PC-3 (cell line): ENCODE measurements at regions of chr1 and their contacts with region 1.

Region 1: GRCh38 chr1:2044510-2045319 is 5.5 kb upstream of the PRKCZ start:
- DNase-seq: peak; percentile 85
- ATAC-seq: peak; percentile 54
- H3K4me3 ChIP-seq: peak overlapping the region; percentile 53
- H3K27ac ChIP-seq: no peak overlapping the region
- H3K4me1 ChIP-seq: peaks cover 18% of the 10 kb centered on the region
- H3K27me3 ChIP-seq: no peaks in the 10 kb centered on the region
- CTCF ChIP-seq: peak; percentile 80

Region 2: DNA sequence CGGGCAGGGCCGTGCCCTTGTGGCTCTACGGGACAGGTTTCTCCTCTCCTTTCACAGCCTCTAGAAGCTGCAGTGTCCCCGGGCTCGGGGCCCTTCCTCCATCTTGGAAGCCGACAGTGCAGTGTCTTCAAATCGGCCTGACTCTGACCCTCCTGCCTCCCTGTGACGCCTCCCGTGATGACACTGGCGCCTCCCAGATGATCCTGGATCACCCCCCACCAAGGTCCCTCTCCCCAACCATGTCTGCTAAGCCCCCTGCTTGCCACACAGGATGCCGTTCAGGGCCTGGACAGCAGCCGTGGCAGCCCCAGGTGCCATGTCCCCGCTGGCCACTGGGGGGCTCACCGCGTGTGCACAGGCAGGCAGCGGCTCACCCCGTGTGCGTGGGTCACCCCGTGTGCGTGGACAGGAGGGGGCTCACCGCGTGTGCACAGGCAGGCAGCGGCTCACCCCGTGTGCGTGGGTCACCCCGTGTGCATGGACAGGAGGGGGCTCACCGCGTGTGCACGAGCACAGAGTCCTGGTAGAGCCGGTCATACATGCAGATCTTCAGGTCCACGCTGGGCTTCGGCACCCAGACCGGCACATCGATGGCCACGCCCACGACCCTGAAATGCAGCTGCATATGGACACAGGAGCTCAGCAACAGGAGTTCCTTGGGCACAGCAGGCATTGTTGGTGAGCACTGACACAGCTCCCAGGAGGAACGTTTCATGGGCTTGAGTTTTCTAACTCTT is 100.7 kb before region 1 on chr1:
- CTCF ChIA-PET with region 1: interaction called, 15 read pairs
- POLR2A ChIA-PET with region 1: no interaction called
- intact Hi-C with region 1: loop called (anchors 2 kb)
- DNase-seq: peak; percentile 74
- ATAC-seq: peak; percentile 98
- H3K4me3 ChIP-seq: peak overlapping the region; percentile 70
- H3K27ac ChIP-seq: no peak overlapping the region
- H3K4me1 ChIP-seq: peaks cover 4% of the 10 kb centered on the region; the same call in 1 of the 2 replicates
- H3K27me3 ChIP-seq: no peaks in the 10 kb centered on the region
- CTCF ChIP-seq: peak; percentile 96

Region 3: DNA sequence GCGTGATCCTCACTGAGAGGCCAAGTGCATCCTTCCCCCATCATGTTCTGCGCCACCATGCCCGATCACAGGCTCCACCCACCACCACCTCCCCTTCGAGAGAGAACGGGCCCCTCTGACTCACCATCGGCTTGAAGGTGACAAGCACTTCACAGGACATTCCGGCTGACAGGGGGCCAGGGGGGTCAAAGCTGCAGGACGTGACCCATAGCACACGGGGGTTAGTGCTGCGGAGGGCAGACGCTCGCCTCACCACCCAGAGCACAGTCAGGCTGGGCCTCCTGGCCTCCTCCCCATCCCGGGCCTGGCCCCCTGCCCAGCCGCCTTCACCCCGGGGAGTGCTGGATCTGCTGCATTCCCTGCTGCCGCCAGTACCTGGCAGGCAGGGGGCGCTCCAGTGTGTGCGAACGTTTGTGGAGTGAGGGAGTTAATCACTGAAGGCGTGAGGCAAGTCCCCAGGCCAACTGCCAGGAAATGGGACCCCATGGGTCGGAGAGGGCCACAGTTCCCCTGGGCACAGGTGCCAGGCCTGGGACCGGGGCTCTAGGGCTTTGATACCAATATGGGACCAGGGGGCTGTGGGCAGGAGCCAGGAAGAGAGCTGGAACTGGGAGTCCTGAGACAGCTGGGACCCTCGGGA is 84.8 kb before region 1 on chr1:
- CTCF ChIA-PET with region 1: interaction called, 34 read pairs
- POLR2A ChIA-PET with region 1: no interaction called
- intact Hi-C with region 1: loop called (anchors 1 kb)
- DNase-seq: peak; percentile 98
- ATAC-seq: peak; percentile 95
- H3K4me3 ChIP-seq: peak overlapping the region; percentile 60
- H3K27ac ChIP-seq: no peak overlapping the region
- H3K4me1 ChIP-seq: peaks cover 12% of the 10 kb centered on the region; the same call in 1 of the 2 replicates
- H3K27me3 ChIP-seq: peaks cover 3% of the 10 kb centered on the region
- CTCF ChIP-seq: peak; percentile 100

Region 4: DNA sequence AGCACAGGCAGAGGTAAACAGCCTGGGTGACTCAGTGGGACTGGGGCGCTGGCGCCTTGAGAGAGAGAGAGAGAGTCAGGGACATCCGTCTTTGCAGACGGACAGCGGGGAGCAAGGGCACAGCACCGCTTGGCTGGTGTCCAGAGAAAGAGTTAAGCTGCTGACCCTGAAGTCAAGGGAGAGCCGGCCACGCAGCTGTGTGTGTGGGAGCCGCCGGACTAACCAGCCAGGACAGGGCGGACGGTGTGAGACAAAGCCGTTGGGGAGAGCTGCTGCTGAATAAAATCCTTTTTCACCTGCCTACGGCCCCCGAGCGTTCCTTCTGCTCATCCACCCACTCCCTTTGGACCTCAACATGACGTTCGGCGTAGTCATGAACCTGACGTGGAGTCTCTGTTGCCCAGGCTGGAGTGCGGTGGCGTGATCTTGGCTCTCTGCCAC is 55.6 kb before region 1 on chr1:
- CTCF ChIA-PET with region 1: no interaction called
- POLR2A ChIA-PET with region 1: no interaction called
- intact Hi-C with region 1: no loop called
- DNase-seq: no peak
- ATAC-seq: no peak
- H3K4me3 ChIP-seq: no peak overlapping the region
- H3K27ac ChIP-seq: no peak overlapping the region
- H3K4me1 ChIP-seq: no peaks in the 10 kb centered on the region
- H3K27me3 ChIP-seq: no peaks in the 10 kb centered on the region
- CTCF ChIP-seq: no peak

Region 5: DNA sequence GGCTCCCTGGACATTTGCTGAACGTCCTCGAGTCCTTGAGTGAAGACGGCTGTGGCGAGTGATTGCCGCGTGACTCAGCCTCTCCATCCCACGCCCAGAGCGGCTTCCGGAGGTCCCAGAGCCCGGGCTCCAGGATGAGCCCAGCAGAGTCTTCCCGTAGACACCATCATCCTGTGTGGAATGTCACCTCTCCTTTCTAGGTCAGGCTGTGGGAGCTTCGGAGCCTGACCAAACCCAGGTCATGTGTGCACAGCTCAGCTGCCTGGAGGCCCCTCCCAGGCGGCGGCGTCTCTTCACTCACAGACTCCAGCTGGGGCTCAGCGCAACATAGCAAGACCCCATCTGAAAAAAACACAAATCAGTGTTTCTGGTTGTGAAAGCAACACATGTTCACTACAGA is 43.7 kb after region 1 on chr1:
- CTCF ChIA-PET with region 1: no interaction called
- POLR2A ChIA-PET with region 1: no interaction called
- intact Hi-C with region 1: no loop called
- DNase-seq: no peak
- ATAC-seq: no peak
- H3K4me3 ChIP-seq: no peak overlapping the region
- H3K27ac ChIP-seq: no peak overlapping the region
- H3K4me1 ChIP-seq: no peaks in the 10 kb centered on the region
- H3K27me3 ChIP-seq: no peaks in the 10 kb centered on the region
- CTCF ChIP-seq: no peak

Region 6: DNA sequence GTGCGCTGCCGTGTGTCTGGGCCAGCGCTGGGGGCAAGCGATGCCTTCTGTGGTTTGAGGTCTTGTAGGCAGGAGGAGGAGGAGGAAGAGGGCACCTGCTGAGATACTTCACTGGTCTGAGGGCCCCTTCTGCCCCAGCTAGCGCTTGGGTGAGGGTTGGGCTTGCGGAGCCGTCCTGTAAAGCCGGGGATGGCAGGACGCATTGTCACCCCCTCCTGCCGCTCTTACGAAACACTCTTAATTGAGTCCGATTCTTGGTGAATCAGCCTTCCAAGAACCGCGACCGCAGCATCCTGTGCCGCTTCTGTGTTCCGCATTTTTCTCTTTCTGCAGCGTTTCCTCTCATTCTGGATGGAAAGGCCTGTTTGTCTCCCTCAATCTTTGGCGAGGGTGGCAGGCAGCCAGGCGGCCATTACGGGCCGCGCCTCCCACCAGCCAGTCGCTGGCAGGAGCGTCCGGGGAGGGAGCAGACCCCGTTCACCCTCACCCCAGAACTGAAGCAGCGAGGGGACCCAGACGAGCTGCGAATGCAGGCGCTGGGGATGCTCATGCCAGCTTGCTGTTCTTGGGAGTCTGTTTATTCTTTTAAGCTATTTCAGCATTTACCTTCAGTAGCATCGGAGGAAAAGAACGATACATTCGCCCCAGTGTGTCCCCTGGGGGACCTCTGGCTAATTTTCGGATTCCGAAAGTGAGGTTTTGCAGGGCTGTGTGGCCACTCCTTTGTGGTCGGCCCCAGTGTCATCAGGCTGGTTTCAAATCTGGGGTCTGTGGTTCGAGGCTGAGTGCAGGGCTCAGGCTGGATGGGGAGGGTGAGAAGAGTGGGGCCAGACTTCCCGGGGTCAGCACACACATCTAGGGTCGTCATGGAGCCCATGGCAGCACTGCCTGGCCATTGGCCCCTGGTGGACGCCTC is 246.1 kb after region 1 on chr1:
- CTCF ChIA-PET with region 1: no interaction called
- POLR2A ChIA-PET with region 1: no interaction called
- intact Hi-C with region 1: no loop called
- DNase-seq: no peak
- ATAC-seq: no peak
- H3K4me3 ChIP-seq: no peak overlapping the region
- H3K27ac ChIP-seq: no peak overlapping the region
- H3K4me1 ChIP-seq: no peaks in the 10 kb centered on the region
- H3K27me3 ChIP-seq: no peaks in the 10 kb centered on the region
- CTCF ChIP-seq: no peak